ENCODE measurements at regions of chr12 and their contacts with region 1.

Region 1: GRCh38 chr12:71636704-71637115 is 26.9 kb downstream of the ZFC3H1 start:
- DNase-seq: peak in 4 of 5 donors; percentile 52 to 59 (median 53)
- H3K4me3 ChIP-seq: no peak overlapping the region
- H3K4me3 Mint-ChIP-seq: no peak overlapping the region
- H3K27ac ChIP-seq: no peak overlapping the region
- H3K27ac Mint-ChIP-seq: peak overlapping the region; percentile 25 to 94 (median 83)
- H3K4me1 ChIP-seq: no peaks in the 10 kb centered on the region
- H3K4me1 Mint-ChIP-seq: peaks cover 6 to 17% (median 9%) of the 10 kb centered on the region in 4 donors
- H3K27me3 ChIP-seq: no peaks in the 10 kb centered on the region
- H3K27me3 Mint-ChIP-seq: no peaks in the 10 kb centered on the region

Region 2: DNA sequence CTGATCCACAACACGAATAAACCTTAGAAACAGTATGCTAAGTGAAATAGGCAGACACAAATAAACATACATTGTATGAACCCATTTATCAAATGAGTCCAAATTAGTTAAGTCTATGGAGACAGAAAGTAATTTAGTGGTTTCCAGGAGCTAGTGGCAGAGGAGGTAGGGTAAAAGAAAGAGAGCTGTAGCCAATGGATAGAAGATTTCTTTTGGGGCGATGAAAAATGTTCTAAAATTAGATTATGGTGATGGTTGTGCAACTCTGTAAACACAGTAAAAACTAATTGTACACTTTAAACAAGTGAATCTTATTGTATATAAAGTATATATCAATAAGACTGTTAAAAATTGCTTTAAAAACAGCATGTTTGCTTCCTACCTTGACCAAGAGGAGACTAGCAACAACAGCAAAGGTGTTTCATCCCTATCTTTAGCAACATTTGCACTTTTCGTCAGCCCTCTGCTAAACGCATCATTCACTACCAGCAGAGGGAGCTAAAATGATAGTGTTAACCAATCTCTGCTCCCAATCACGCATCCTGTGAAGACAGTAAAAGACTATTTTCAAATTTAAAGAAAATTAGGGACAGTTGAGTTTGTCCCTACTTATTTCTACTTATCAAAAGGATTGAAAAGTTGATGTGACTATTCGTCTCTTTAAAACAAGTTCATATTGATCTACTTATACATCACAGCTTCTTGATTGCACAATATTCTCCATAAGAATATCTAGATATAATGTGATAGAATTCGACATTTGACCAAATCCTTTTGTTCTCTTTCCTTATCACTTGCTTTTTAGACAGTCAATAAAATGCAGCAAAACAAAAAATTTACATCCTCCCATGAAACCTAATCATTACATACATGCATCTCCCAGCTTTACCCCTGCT is 221.1 kb before region 1 on chr12:
- CTCF ChIA-PET with region 1: interaction called, 6 read pairs
- POLR2A ChIA-PET with region 1: no interaction called
- intact Hi-C with region 1: loop called (anchors 1 kb)
- DNase-seq: peak in 4 of 5 donors; percentile 39 to 47 (median 44)
- H3K4me3 ChIP-seq: no peak overlapping the region
- H3K4me3 Mint-ChIP-seq: no peak overlapping the region
- H3K27ac ChIP-seq: no peak overlapping the region
- H3K27ac Mint-ChIP-seq: no peak overlapping the region
- H3K4me1 ChIP-seq: no peaks in the 10 kb centered on the region
- H3K4me1 Mint-ChIP-seq: no peaks in the 10 kb centered on the region
- H3K27me3 ChIP-seq: no peaks in the 10 kb centered on the region
- H3K27me3 Mint-ChIP-seq: peaks cover 2 to 11% of the 10 kb centered on the region in 2 donors

Region 3: DNA sequence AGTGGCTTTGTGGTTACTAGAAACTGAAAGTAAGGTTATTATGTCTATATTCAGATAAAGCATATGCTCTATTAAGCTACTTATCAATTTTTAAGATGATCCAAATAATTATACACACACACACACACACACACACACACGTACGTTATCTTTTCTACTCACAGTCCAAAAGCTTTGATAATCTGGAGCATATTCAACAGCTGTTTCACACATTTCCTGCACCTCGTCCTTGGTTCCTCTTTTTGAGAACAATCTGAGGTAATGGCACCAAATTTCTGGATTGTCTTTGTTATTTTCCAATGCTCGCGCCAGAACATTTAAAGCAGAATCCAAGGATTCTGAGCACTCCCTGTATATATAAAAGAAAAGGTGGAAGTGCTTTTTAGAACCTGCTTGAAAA is 10.6 kb before region 1 on chr12:
- CTCF ChIA-PET with region 1: interaction called, 17 read pairs
- POLR2A ChIA-PET with region 1: no interaction called
- intact Hi-C with region 1: no loop called
- DNase-seq: no peak
- H3K4me3 ChIP-seq: no peak overlapping the region
- H3K4me3 Mint-ChIP-seq: no peak overlapping the region
- H3K27ac ChIP-seq: no peak overlapping the region
- H3K27ac Mint-ChIP-seq: peak overlapping the region in 6 of 7 donors; percentile 6 to 77 (median 23)
- H3K4me1 ChIP-seq: peaks cover 12% of the 10 kb centered on the region
- H3K4me1 Mint-ChIP-seq: peaks cover 10 to 15% (median 11%) of the 10 kb centered on the region in 4 donors
- H3K27me3 ChIP-seq: no peaks in the 10 kb centered on the region
- H3K27me3 Mint-ChIP-seq: no peaks in the 10 kb centered on the region

Region 4: GRCh38 chr12:71685914-71686665 is 49.4 kb after region 1 on chr12 and contains the start of gene TMEM19:
- CTCF ChIA-PET with region 1: interaction called, 23 read pairs
- POLR2A ChIA-PET with region 1: interaction called, 3 read pairs
- intact Hi-C with region 1: no loop called
- DNase-seq: peak; percentile 82 to 86 (median 84)
- H3K4me3 ChIP-seq: peak within 1 kb of the TSS; percentile 47 to 73
- H3K4me3 Mint-ChIP-seq: peak within 1 kb of the TSS; percentile 92 to 99 (median 96)
- H3K27ac ChIP-seq: peak within 1 kb of the TSS; percentile 72
- H3K27ac Mint-ChIP-seq: peak within 1 kb of the TSS; percentile 80 to 98 (median 95)
- H3K4me1 ChIP-seq: peaks cover 27% of the 10 kb centered on the region
- H3K4me1 Mint-ChIP-seq: peaks cover 10 to 32% (median 17%) of the 10 kb centered on the region in 4 donors
- H3K27me3 ChIP-seq: no peaks in the 10 kb centered on the region
- H3K27me3 Mint-ChIP-seq: no peaks in the 10 kb centered on the region
- total RNA-seq, gene TMEM19: 10.5 to 14.1 TPM

Measured in CD4-positive, alpha-beta memory T cell (primary cell).